Sciatic nerve (tissue), 2 donors: ENCODE measurements at regions of chr18 and their contacts with region 1.

Region 1: GRCh38 chr18:7921938-7922587 is 354.9 kb downstream of the PTPRM start:
- DNase-seq: no peak
- ATAC-seq: no peak

Region 2: GRCh38 chr18:7561909-7562460 is 360.1 kb before region 1 on chr18:
- intact Hi-C with region 1: loop called (anchors 2 kb)
- DNase-seq: no peak
- ATAC-seq: no peak

Region 3: DNA sequence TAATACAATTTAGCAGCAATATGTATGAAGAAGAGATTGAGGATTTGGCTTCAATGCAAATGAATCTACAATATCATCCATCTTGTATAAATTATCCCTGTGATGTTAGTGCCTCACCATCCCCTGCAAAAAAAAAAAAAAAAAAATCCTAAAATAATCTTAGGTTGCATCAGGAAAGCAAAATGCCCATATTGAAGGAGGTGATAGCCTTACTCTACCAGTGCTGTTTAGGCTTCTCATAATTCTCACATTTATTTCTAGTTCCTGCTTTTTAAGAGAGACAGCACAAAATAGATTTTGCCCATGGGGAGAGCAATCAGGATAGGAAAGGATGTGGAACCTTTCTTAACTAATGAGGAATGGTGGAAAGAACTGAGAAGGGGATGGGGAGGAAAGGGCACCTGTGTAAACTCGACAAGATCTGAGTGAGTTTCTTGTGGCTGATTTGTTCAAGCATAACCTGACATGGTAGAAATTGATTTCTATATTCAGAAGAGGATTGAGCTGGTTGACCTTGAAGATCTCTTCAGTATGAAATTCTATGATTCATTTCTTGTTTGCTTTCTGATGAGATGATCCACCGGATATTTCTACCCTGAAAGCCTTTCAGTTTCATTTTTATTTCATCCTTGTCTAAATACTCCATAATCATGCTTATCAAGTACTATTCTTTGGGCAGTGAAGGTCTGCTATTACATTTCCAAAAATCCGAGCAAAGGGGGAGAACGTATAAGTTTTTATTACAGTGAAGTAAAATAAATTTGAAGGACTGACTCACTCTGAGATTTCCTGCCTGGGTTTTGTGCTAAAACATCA is 36.2 kb after region 1 on chr18:
- intact Hi-C with region 1: no loop called
- DNase-seq: no peak
- ATAC-seq: no peak